ENCODE measurements at regions of chr12 and their contacts with region 1.

Region 1: GRCh38 chr12:6792522-6793201 is 3.3 kb downstream of the CD4 start:
- DNase-seq: peak; percentile 52
- ATAC-seq: peak; percentile 20
- H3K4me3 Mint-ChIP-seq: peak overlapping the region; percentile 89
- H3K27ac Mint-ChIP-seq: peak overlapping the region; percentile 93
- H3K4me1 Mint-ChIP-seq: peaks cover 56% of the 10 kb centered on the region
- H3K27me3 Mint-ChIP-seq: no peaks in the 10 kb centered on the region

Region 2: DNA sequence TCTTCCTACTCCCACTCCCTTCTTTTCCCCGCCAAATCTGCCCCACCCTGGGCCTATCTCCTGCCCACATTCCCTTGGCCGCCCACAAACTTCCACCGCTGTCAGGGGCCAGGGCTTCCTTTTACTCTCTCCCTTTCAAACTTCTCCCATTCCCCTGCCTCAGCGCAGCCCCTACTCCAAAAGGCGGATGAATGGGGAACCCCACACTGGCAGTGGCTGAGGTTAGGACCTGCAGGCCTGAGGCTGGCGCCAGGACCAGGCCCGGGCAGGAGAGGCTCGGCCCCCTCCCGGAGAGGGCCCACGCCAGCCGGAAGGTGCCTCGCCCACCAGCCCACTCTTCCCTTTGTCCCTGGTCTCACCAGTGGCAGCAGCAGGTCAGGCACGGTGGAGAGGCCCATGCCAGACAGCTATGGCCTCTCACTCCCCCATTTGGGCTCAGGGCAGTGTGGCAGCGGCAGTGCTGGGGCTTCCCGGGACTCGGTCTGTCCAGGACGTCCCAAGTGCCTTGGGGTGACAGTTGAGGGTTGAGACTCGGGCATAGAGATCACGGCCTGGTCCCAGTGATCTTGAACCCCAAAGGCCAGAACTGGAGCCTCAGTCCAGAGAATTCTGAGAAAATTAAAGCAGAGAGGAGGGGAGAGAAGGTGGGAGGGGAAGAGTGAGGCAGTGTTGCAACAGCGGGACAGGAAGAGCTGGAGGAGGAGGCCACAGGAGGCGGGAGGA is 451.1 kb before region 1 on chr12 and contains the start of gene TNFRSF1A:
- CTCF ChIA-PET with region 1: no interaction called
- POLR2A ChIA-PET with region 1: no interaction called
- intact Hi-C with region 1: loop called in 1 of 2 experiments (anchors 5 kb)
- DNase-seq: peak; percentile 74
- ATAC-seq: peak; percentile 45
- H3K4me3 Mint-ChIP-seq: no peak within 1 kb of the TSS
- H3K27ac Mint-ChIP-seq: no peak within 1 kb of the TSS
- H3K4me1 Mint-ChIP-seq: peaks cover 37% of the 10 kb centered on the region
- H3K27me3 Mint-ChIP-seq: no peaks in the 10 kb centered on the region
- total RNA-seq, gene TNFRSF1A: 42.1 to 58.7 TPM

Region 3: DNA sequence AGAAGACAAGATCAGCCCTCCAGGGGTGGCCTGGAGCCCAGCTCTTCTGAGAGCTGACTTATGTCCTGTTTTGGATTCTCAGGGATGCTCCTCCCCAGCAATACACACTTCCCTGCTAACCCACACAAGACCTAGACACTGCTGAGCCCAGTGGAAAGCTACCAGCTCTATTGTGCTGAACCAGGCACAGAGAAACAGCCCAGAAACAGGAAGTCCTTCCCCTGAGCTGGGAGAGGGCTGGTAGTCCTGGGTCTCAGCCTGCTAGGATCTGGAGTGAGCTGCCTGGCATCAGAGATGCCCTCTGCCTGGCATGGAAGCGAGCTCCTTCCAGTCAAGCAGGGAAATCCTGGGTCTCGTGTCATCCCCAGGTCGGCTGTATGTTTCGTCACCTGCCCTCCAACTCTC is 21.6 kb before region 1 on chr12:
- CTCF ChIA-PET with region 1: interaction called, 9 read pairs
- POLR2A ChIA-PET with region 1: interaction called, 6 read pairs
- intact Hi-C with region 1: loop called in 1 of 2 experiments (anchors 2 kb)
- DNase-seq: peak; percentile 36
- ATAC-seq: peak; percentile 18
- H3K4me3 Mint-ChIP-seq: no peak overlapping the region
- H3K27ac Mint-ChIP-seq: peak overlapping the region; percentile 89
- H3K4me1 Mint-ChIP-seq: peaks cover 68% of the 10 kb centered on the region
- H3K27me3 Mint-ChIP-seq: peaks cover 18% of the 10 kb centered on the region

Region 4: GRCh38 chr12:6825398-6826124 is 32.9 kb after region 1 on chr12:
- CTCF ChIA-PET with region 1: interaction called, 4 read pairs
- POLR2A ChIA-PET with region 1: interaction called, 4 read pairs
- intact Hi-C with region 1: loop called in 1 of 2 experiments (anchors 5 kb)
- DNase-seq: peak; percentile 91
- ATAC-seq: peak; percentile 64
- H3K4me3 Mint-ChIP-seq: no peak overlapping the region
- H3K27ac Mint-ChIP-seq: peak overlapping the region; percentile 16
- H3K4me1 Mint-ChIP-seq: peaks cover 36% of the 10 kb centered on the region
- H3K27me3 Mint-ChIP-seq: peaks cover 32% of the 10 kb centered on the region